Activated naive CD4-positive, alpha-beta T cell treated with anti-CD3 and anti-CD28 coated beads for 36 hours (primary cell): ENCODE measurements at regions of chr19 and their contacts with region 1.

Region 1: DNA sequence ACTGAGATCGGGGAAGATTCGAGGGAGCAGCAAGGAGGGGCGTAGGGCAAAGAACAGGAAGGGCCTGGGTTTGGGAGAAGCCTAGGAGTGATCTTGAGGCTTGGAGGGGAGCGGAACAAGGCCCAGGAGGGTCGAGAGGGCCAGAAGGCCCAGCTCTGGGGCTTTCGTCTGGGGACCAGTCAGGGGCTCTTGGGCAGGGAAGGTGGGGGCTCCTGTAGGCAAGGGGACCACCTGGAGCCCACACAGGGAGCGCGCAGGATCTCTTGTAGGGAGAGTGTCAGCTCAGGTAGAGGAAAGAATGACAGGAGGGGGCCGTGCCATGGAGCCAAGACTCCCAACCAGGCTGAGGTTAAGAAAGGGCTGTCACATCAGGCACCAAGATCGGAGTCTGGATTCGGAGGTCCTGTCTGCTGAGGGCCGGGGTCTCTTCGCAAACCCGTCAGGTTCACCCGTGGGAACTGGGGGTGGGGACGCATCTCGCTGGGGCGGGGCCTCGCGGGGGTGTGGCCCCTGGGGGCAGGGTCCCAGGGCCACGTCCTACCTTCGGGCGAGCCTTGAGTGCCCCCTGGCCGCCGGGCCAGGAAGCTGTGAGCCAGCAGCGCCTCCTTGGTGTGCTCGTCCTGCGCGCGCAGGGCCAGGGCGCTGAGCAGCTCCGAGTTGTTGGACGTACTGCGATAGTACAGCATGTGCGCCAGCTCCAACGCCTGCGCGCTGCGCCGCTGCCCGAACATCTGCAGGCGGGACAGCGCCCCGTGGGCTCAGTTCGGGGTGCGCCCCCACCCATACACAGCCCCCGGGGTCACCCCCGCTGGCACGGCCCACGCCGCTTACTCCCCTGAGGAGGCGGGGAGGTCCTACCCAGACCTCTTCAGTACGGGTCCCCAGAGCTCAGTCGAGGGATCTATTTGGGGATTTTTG is 8.4 kb downstream of the EMP3 start:
- DNase-seq: peak; percentile 95
- H3K4me3 Mint-ChIP-seq: peak overlapping the region; percentile 87
- H3K27ac Mint-ChIP-seq: peak overlapping the region; percentile 92
- H3K4me1 Mint-ChIP-seq: peaks cover 47% of the 10 kb centered on the region
- H3K27me3 Mint-ChIP-seq: no peaks in the 10 kb centered on the region

Region 2: DNA sequence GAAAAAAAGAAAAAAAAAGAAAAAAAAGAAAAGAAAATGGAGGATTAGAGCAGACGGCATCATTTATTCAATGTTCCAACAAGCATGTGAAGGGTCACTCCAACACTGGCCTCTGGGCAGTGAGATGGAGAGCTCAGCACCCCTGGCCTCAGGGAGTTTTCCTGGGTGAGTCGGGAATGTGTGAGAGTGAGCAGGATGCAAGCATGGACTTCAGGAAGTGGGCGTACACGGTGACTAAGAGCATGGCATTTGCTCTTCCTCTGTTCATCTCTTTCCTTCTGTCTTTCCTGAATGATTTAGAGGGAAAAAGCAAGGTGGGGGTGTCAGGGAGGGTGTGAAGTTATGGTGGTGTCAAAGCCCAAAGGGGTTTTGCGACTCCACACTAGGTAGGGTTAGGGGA is 289.2 kb before region 1 on chr19:
- CTCF ChIA-PET with region 1: no interaction called
- intact Hi-C with region 1: no loop called
- DNase-seq: no peak
- H3K4me3 Mint-ChIP-seq: no peak overlapping the region
- H3K27ac Mint-ChIP-seq: no peak overlapping the region
- H3K4me1 Mint-ChIP-seq: no peaks in the 10 kb centered on the region
- H3K27me3 Mint-ChIP-seq: peaks cover 26% of the 10 kb centered on the region

Region 3: GRCh38 chr19:48271531-48272151 is 62.1 kb before region 1 on chr19:
- CTCF ChIA-PET with region 1: interaction called, 50 read pairs
- intact Hi-C with region 1: loop called (anchors 2 kb)
- DNase-seq: peak; percentile 23
- H3K4me3 Mint-ChIP-seq: peak overlapping the region; percentile 81
- H3K27ac Mint-ChIP-seq: no peak overlapping the region
- H3K4me1 Mint-ChIP-seq: peaks cover 14% of the 10 kb centered on the region
- H3K27me3 Mint-ChIP-seq: peaks cover 8% of the 10 kb centered on the region

Region 4: GRCh38 chr19:48315712-48316111 is 18.0 kb before region 1 on chr19:
- CTCF ChIA-PET with region 1: interaction called, 131 read pairs
- intact Hi-C with region 1: no loop called
- DNase-seq: no peak
- H3K4me3 Mint-ChIP-seq: no peak overlapping the region
- H3K27ac Mint-ChIP-seq: no peak overlapping the region
- H3K4me1 Mint-ChIP-seq: peaks cover 9% of the 10 kb centered on the region
- H3K27me3 Mint-ChIP-seq: no peaks in the 10 kb centered on the region

Region 5: GRCh38 chr19:48391107-48391986 is 57.6 kb after region 1 on chr19 and contains the start of gene KDELR1:
- CTCF ChIA-PET with region 1: interaction called, 10 read pairs
- intact Hi-C with region 1: no loop called
- DNase-seq: peak; percentile 73
- H3K4me3 Mint-ChIP-seq: peak within 1 kb of the TSS; percentile 94
- H3K27ac Mint-ChIP-seq: peak within 1 kb of the TSS; percentile 90
- H3K4me1 Mint-ChIP-seq: peaks cover 36% of the 10 kb centered on the region
- H3K27me3 Mint-ChIP-seq: peaks cover 27% of the 10 kb centered on the region
- total RNA-seq, gene KDELR1: 81.5 to 83.8 TPM